Activated CD4-positive, alpha-beta T cell treated with anti-CD3 and anti-CD28 coated beads, Interleukin-2, amount 10 ng/mL, durations not matched to agents 24 days and 14 days (primary cell): ENCODE measurements at regions of chr15 and their contacts with region 1.

Region 1: DNA sequence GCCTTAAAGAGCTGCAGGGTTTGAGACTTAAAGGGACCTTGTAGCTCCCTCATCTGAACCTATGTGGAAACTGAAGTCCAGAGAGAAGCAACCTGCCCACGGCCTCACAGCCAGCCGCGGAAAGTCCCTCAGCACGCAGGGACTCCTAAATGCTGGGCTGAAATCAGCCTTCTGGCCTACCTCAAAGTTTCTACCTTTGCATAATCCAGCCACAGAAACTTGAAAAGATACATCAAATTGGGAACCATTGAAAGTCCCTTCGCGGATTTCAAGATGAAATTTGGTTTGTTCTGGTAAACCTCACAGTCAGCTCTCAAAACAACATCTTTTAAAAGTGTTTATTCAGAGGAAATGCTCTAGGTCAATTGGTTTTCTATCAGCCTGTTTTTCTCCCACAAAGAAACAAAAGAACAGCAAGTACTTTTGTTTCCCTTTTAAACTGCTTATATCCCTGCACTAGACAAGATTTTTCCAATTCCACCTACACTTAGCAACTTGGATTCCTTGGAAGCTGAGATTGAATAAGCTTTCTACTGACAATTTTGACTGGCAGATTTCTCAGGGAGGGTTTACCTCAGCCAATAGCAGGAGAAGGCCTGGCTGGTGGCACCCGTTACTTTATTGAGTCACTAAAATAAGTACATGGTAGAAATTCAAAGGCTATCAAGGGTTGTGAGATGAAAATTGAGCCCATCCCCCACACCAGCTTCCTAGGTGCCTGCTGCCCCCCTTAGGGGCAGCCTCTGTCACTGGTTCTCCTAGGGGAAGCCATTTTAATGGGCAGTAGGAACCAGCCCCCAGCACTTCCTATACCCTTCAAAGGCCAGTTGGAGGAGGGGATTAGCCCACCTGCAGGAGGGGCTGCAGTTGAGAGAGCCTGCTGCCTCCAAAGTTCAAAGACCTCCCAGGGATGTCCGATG is 171.2 kb downstream of the ADAMTS17 start:
- DNase-seq: peak; percentile 73
- H3K4me3 Mint-ChIP-seq: peak overlapping the region; percentile 30
- H3K27ac Mint-ChIP-seq: peak overlapping the region; percentile 78
- H3K4me1 Mint-ChIP-seq: peaks cover 8% of the 10 kb centered on the region
- H3K27me3 Mint-ChIP-seq: no peaks in the 10 kb centered on the region

Region 2: DNA sequence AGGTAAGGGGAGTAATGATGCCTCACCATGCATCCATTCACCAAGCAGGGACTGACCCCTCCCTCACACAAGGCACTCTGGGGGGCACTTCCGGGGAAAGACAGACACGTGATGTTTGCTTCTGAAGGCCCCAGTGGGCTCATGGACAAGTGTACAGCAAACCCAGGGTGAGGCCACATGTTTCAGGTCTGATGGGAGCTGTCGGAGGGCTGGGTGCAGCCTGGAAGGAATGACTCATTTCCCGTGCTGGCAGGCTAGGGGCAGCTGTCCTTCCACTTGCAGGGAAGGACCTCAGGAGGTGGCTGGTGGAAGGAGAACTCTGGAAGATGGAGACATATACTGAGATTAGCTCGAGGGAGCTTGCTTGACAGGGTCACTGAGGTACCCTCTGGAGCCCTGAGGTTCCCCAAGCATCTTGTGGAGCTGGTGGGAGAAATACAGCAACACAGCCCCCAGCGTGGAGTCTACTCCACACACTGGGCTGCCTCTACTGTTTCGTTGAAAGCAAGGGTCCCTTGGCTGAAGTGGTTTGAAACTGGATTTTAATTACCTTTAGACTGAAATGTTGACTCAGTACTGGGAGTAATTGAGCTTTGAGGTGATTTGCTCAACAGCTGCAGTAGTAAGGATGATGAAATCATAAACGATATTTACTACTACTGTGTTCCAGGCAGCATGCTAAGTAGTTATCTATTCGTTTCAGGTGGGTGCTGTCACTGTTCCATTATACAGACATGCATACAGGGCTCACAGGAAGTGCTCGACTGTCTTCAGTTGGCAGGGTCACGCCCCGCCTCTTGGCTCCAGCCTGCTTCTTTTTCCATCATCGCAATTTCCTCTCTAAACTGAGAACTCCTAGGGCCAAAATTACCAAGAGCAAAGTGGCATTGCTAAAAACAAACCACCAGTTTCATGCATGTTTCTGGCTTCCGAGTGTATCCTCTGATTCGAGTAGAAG is 59.2 kb before region 1 on chr15:
- intact Hi-C with region 1: loop called (anchors 2 kb)
- DNase-seq: peak; percentile 79
- H3K4me3 Mint-ChIP-seq: peak overlapping the region; percentile 47
- H3K27ac Mint-ChIP-seq: peak overlapping the region; percentile 91
- H3K4me1 Mint-ChIP-seq: peaks cover 30% of the 10 kb centered on the region
- H3K27me3 Mint-ChIP-seq: no peaks in the 10 kb centered on the region

Region 3: DNA sequence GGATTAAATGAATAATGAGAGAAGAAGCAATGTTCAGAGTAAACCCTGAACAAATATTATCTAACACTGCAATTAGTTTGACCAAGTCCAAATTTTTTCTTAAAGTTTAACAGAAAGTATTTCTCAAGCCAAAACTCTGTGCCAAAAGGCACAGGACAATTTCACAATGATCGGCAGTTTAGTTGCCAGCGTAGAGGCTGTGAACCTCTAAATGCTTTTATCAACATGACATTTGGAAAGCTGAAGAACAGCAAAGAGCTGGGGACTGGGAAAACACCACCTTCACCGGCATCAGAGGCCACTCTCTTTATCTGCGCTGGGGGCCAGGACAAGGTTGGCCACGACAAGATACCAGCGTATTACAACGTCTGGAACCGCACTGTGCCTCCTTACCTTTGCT is 45.6 kb after region 1 on chr15:
- intact Hi-C with region 1: no loop called
- DNase-seq: no peak
- H3K4me3 Mint-ChIP-seq: no peak overlapping the region
- H3K27ac Mint-ChIP-seq: no peak overlapping the region
- H3K4me1 Mint-ChIP-seq: no peaks in the 10 kb centered on the region
- H3K27me3 Mint-ChIP-seq: peaks cover 2% of the 10 kb centered on the region